Vagina (tissue), 2 donors: ENCODE measurements at regions of chr7 and their contacts with region 1.

Region 1: GRCh38 chr7:128455551-128456254 is at the start of gene HILPDA:
- DNase-seq: peak in 1 of 2 donors; percentile 93
- H3K4me3 ChIP-seq: peak within 1 kb of the TSS; percentile 64 to 79
- H3K27ac ChIP-seq: peak within 1 kb of the TSS; percentile 91
- H3K4me1 ChIP-seq: peaks cover 46% of the 10 kb centered on the region
- H3K27me3 ChIP-seq: no peaks in the 10 kb centered on the region
- CTCF ChIP-seq: no peak
- POLR2A ChIP-seq: peak in 1 of 2 donors; percentile 40
- total RNA-seq, gene HILPDA: 46.4 TPM

Region 2: GRCh38 chr7:128409596-128410160 is 46.0 kb before region 1 on chr7 and contains the start of gene IMPDH1:
- intact Hi-C with region 1: loop called (anchors 10 kb)
- DNase-seq: no peak
- H3K4me3 ChIP-seq: peak within 1 kb of the TSS; percentile 63 to 66
- H3K27ac ChIP-seq: peak within 1 kb of the TSS; percentile 90
- H3K4me1 ChIP-seq: peaks cover 42% of the 10 kb centered on the region
- H3K27me3 ChIP-seq: no peaks in the 10 kb centered on the region
- CTCF ChIP-seq: peak in 1 of 3 experiments; percentile 25
- POLR2A ChIP-seq: peak; percentile 22 to 64
- total RNA-seq, gene IMPDH1: 52.3 TPM

Region 3: DNA sequence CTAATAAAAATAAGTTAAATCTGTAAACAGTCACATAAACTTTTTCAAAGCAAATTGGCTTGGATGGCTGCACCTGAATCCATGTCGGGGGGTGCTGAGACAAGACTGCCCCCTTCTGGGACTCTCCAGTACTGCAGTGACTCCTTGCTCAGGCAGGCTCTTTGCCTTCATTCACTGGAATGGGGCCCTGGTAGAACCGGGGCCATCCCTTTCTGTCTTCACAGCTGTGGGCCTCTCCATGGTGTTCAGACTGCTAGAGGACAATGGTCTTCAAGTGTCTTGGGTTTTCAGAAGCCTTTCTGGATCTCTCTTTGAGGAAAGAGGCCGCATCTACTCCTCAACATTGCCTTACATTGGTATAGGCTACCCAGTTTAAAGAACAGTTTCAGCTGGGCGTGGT is 29.9 kb before region 1 on chr7:
- intact Hi-C with region 1: loop called (anchors 2 kb)
- DNase-seq: no peak
- H3K4me3 ChIP-seq: no peak overlapping the region
- H3K27ac ChIP-seq: no peak overlapping the region
- H3K4me1 ChIP-seq: no peaks in the 10 kb centered on the region
- H3K27me3 ChIP-seq: no peaks in the 10 kb centered on the region
- CTCF ChIP-seq: peak; percentile 56 to 76 (median 74)
- POLR2A ChIP-seq: no peak

Region 4: DNA sequence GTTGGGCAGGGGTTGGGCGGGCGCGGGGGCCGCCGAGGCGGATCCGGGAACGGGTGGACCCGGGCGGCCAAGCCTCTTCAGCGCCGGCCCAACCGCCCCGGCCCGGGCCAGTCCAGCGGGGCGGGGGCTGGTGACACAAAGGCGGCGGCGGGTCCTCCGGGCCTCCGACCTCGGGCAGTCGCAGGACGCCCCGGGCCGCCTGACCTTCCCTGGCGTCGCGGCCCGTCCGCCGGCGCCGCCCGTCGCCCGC is 75.1 kb after region 1 on chr7:
- intact Hi-C with region 1: loop called (anchors 2 kb)
- DNase-seq: no peak
- H3K4me3 ChIP-seq: peak overlapping the region; percentile 62 to 79
- H3K27ac ChIP-seq: peak overlapping the region; percentile 95
- H3K4me1 ChIP-seq: peaks cover 11% of the 10 kb centered on the region
- H3K27me3 ChIP-seq: no peaks in the 10 kb centered on the region
- CTCF ChIP-seq: no peak
- POLR2A ChIP-seq: no peak